ENCODE measurements at regions of chr7 and their contacts with region 1.

Region 1: DNA sequence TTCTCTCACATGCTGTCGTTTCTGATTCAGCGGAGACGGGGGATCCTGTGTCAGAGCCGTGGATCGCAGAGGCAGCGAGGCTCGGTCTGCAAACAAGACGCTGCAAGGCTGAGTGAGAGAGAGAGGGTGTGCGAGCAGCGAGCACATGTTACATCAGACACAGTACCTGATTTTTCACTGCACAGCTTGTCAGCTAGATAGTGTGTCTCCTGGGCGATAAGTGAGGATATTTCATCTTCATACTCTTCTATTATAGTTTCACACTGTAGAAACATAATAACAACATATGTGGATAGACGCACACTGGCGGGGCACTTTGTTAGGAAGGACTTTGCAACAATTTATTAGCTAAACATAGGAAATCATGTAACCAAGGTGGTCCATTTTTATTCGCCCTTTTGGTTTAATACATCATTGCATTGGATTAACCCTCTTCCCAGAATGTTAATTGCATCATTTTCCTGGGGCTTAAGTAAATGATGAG is 39.5 kb downstream of the CNPY1 start:
- DNase-seq: no peak
- ATAC-seq: no peak

Region 2: GRCh38 chr7:155456738-155457564 is 49.9 kb before region 1 on chr7:
- intact Hi-C with region 1: loop called (anchors 10 kb)
- DNase-seq: peak; percentile 75
- ATAC-seq: peak; percentile 83